ENCODE measurements at regions of chr14 and their contacts with region 1.

Region 1: GRCh38 chr14:61280526-61281185 is 482 bp downstream of the TMEM30B start:
- DNase-seq: peak; percentile 60 to 84 (median 74)
- H3K4me3 ChIP-seq: peak overlapping the region; percentile 72
- H3K4me3 Mint-ChIP-seq: peak overlapping the region; percentile 89 to 95 (median 94)
- H3K27ac ChIP-seq: peak overlapping the region; percentile 70
- H3K27ac Mint-ChIP-seq: peak overlapping the region; percentile 82 to 97 (median 92)
- H3K4me1 ChIP-seq: peaks cover 17% of the 10 kb centered on the region
- H3K4me1 Mint-ChIP-seq: peaks cover 25 to 45% (median 27%) of the 10 kb centered on the region in 3 donors
- H3K27me3 ChIP-seq: no peaks in the 10 kb centered on the region
- H3K27me3 Mint-ChIP-seq: peaks cover 2% of the 10 kb centered on the region in 2 donors

Region 2: GRCh38 chr14:61080591-61081010 is 200.1 kb before region 1 on chr14:
- CTCF ChIA-PET with region 1: no interaction called
- POLR2A ChIA-PET with region 1: no interaction called
- DNase-seq: no peak
- H3K4me3 ChIP-seq: no peak overlapping the region
- H3K4me3 Mint-ChIP-seq: no peak overlapping the region
- H3K27ac ChIP-seq: no peak overlapping the region
- H3K27ac Mint-ChIP-seq: no peak overlapping the region
- H3K4me1 ChIP-seq: no peaks in the 10 kb centered on the region
- H3K4me1 Mint-ChIP-seq: no peaks in the 10 kb centered on the region
- H3K27me3 ChIP-seq: no peaks in the 10 kb centered on the region
- H3K27me3 Mint-ChIP-seq: peaks cover 0 to 2% of the 10 kb centered on the region in 2 donors

Region 3: DNA sequence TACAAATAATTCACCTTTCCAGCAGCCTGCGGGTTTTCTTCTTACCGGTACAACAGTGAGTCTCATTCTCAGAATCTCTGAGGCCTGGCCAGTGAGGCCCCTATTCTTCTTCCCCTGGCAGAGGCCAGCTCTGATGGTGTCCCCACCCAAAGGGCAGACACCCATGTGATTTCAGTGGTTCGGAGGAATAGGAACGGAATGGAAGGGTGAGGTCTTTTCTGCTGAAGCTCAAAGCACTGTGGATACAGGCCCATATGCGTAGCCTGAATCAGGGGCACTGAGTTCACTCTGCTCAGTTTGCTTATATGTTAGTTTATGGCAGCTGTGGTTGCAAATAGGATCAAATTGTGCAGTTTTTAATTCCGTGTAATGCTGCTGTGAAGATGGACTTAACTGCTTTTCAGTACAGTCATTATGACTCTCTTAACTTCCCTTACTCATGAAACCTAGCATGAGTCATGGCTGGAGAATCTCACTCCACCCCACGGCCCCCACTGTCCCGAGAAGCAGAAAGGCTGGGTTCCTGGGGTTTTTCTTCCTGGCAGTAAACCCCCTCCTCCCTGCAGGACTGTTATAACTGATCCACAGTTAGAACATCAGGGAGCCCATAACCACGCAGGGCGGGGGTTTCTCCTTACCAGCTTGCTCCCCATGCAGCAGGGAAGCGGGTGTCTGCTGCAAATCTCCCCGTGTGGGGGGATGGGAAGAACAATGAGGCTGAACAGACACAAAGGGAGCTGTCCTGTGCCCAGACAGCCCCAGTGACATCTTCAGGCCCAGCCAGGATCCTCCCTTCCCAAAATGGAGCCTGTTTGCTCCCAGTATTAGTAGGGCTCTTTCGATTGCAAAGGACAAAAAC is 176.9 kb before region 1 on chr14:
- CTCF ChIA-PET with region 1: no interaction called
- POLR2A ChIA-PET with region 1: no interaction called
- DNase-seq: no peak
- H3K4me3 ChIP-seq: no peak overlapping the region
- H3K4me3 Mint-ChIP-seq: no peak overlapping the region
- H3K27ac ChIP-seq: peak overlapping the region; percentile 67
- H3K27ac Mint-ChIP-seq: no peak overlapping the region
- H3K4me1 ChIP-seq: no peaks in the 10 kb centered on the region
- H3K4me1 Mint-ChIP-seq: no peaks in the 10 kb centered on the region
- H3K27me3 ChIP-seq: no peaks in the 10 kb centered on the region
- H3K27me3 Mint-ChIP-seq: peaks cover 0 to 3% of the 10 kb centered on the region in 2 donors

Region 4: GRCh38 chr14:61269321-61270083 is 11.2 kb before region 1 on chr14:
- CTCF ChIA-PET with region 1: interaction called, 89 read pairs
- POLR2A ChIA-PET with region 1: interaction called, 4 read pairs
- DNase-seq: peak; percentile 54 to 82 (median 65)
- H3K4me3 ChIP-seq: peak overlapping the region; percentile 29
- H3K4me3 Mint-ChIP-seq: peak overlapping the region in 6 of 7 donors; percentile 55 to 83 (median 77)
- H3K27ac ChIP-seq: no peak overlapping the region
- H3K27ac Mint-ChIP-seq: peak overlapping the region in 1 of 8 donors; percentile 53
- H3K4me1 ChIP-seq: peaks cover 5% of the 10 kb centered on the region
- H3K4me1 Mint-ChIP-seq: peaks cover 0 to 7% (median 4%) of the 10 kb centered on the region in 3 donors
- H3K27me3 ChIP-seq: peaks cover 4% of the 10 kb centered on the region
- H3K27me3 Mint-ChIP-seq: peaks cover 29 to 60% of the 10 kb centered on the region in 2 donors

Region 5: DNA sequence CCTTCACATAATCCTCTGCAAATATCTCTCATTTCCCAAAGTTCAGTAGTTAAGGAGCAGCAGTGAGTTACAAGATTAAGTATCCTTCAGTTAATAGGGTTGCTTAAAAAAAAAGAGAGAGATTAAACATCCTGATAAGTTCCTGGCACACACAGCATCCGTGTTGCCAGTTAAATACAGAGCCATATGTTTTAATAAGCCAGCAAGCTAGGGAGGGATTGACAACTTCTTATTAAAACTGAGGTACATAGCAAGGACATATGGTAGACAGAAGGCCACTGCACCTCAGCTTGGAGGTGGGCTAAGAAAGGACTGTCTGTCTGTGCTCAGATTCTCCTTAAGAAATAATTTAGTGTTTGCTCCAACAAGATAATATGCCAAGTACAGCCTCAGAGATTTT is 10.0 kb after region 1 on chr14:
- CTCF ChIA-PET with region 1: interaction called, 27 read pairs
- POLR2A ChIA-PET with region 1: interaction called, 4 read pairs
- DNase-seq: no peak
- H3K4me3 ChIP-seq: no peak overlapping the region
- H3K4me3 Mint-ChIP-seq: no peak overlapping the region
- H3K27ac ChIP-seq: no peak overlapping the region
- H3K27ac Mint-ChIP-seq: no peak overlapping the region
- H3K4me1 ChIP-seq: peaks cover under 1% of the 10 kb centered on the region
- H3K4me1 Mint-ChIP-seq: peaks cover 5 to 13% (median 10%) of the 10 kb centered on the region in 3 donors
- H3K27me3 ChIP-seq: no peaks in the 10 kb centered on the region
- H3K27me3 Mint-ChIP-seq: no peaks in the 10 kb centered on the region

Region 6: DNA sequence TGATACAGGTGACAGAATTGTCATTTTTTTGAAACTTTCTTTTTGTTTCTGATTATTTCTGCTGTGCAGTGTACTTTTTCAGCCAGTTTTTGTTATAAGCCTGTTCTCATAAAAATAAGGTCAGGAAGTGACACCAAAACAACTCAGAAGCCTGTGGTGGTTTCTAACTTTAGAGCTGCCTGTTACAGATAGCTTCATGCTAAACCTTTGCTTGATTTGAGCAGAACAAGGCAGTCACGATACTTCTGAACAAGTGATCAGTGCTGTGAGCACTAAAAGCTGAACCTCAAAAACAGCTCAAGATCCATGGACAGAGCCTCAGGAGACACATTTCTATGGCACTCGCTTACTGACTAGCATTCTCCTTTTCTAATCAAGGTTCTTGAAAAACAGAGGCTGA is 122.8 kb after region 1 on chr14:
- CTCF ChIA-PET with region 1: interaction called, 11 read pairs
- POLR2A ChIA-PET with region 1: no interaction called
- DNase-seq: peak in 2 of 5 donors; percentile 60 to 64
- H3K4me3 ChIP-seq: no peak overlapping the region
- H3K4me3 Mint-ChIP-seq: peak overlapping the region; percentile 15 to 76 (median 69)
- H3K27ac ChIP-seq: no peak overlapping the region
- H3K27ac Mint-ChIP-seq: peak overlapping the region; percentile 36 to 95 (median 90)
- H3K4me1 ChIP-seq: peaks cover 89% of the 10 kb centered on the region
- H3K4me1 Mint-ChIP-seq: peaks cover 40 to 89% (median 56%) of the 10 kb centered on the region in 3 donors
- H3K27me3 ChIP-seq: no peaks in the 10 kb centered on the region
- H3K27me3 Mint-ChIP-seq: no peaks in the 10 kb centered on the region

Region 7: DNA sequence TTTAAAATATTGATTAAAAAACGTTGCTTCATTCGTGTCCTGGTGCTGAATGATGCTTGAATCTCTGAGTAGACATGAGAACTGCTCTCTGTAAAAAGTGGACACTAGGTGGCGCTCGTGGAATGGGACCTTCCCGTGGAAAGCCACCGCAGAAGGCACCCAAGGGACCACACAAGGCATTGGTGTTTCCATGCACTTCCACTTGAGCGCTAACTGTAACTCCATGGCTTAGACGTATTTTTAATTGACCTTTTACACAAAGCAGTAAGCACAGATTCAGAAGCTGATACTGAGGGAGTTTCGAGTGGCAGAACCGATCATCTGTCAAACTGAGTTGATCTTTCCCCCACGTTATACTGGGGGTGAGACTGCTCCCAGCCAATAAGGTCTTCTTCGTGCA is 176.1 kb after region 1 on chr14:
- CTCF ChIA-PET with region 1: interaction called, 6 read pairs
- POLR2A ChIA-PET with region 1: interaction called, 10 read pairs
- DNase-seq: peak; percentile 72 to 87 (median 77)
- H3K4me3 ChIP-seq: no peak overlapping the region
- H3K4me3 Mint-ChIP-seq: peak overlapping the region in 2 of 7 donors; percentile 34 to 64
- H3K27ac ChIP-seq: no peak overlapping the region
- H3K27ac Mint-ChIP-seq: peak overlapping the region; percentile 81 to 94 (median 91)
- H3K4me1 ChIP-seq: peaks cover 64% of the 10 kb centered on the region
- H3K4me1 Mint-ChIP-seq: peaks cover 80 to 93% (median 87%) of the 10 kb centered on the region in 3 donors
- H3K27me3 ChIP-seq: no peaks in the 10 kb centered on the region
- H3K27me3 Mint-ChIP-seq: peaks cover 0 to 11% of the 10 kb centered on the region in 2 donors

Measured in CD8-positive, alpha-beta memory T cell (primary cell).